ENCODE measurements at regions of chr5 and their contacts with region 1.

Region 1: GRCh38 chr5:43227655-43228054 is 35.6 kb downstream of the NIM1K start:
- DNase-seq: peak in 1 of 2 experiments; percentile 43
- H3K4me3 ChIP-seq: no peak overlapping the region
- H3K4me3 Mint-ChIP-seq: no peak overlapping the region
- H3K27ac Mint-ChIP-seq: no peak overlapping the region
- H3K4me1 ChIP-seq: no peaks in the 10 kb centered on the region
- H3K4me1 Mint-ChIP-seq: no peaks in the 10 kb centered on the region
- H3K27me3 ChIP-seq: no peaks in the 10 kb centered on the region
- H3K27me3 Mint-ChIP-seq: no peaks in the 10 kb centered on the region
- CTCF ChIP-seq: peak; percentile 52 to 67

Region 2: DNA sequence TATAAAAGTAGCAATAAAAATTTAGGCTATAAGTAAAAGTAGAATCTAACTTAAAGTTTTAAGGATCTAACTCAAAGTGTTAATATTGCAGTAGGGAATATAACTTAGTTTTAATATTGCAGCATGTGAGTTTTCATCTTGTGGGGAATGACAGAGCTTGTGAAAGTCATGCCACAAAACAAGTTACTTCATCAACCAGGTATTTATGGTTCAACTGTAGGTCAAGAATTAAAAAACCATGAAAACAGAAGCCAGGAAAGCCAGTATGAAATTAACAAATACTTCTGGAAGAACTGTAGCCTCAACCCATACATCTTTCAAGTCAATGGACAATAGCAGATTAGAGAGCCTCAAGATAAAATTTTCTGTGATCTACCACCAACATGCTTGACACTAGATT is 66.6 kb after region 1 on chr5:
- CTCF ChIA-PET with region 1: no interaction called
- POLR2A ChIA-PET with region 1: no interaction called
- intact Hi-C with region 1: loop called (anchors 5 kb)
- DNase-seq: no peak
- H3K4me3 ChIP-seq: no peak overlapping the region
- H3K4me3 Mint-ChIP-seq: no peak overlapping the region
- H3K27ac Mint-ChIP-seq: no peak overlapping the region
- H3K4me1 ChIP-seq: peaks cover 6% of the 10 kb centered on the region
- H3K4me1 Mint-ChIP-seq: peaks cover 6% of the 10 kb centered on the region
- H3K27me3 ChIP-seq: no peaks in the 10 kb centered on the region
- H3K27me3 Mint-ChIP-seq: no peaks in the 10 kb centered on the region
- CTCF ChIP-seq: no peak

Region 3: DNA sequence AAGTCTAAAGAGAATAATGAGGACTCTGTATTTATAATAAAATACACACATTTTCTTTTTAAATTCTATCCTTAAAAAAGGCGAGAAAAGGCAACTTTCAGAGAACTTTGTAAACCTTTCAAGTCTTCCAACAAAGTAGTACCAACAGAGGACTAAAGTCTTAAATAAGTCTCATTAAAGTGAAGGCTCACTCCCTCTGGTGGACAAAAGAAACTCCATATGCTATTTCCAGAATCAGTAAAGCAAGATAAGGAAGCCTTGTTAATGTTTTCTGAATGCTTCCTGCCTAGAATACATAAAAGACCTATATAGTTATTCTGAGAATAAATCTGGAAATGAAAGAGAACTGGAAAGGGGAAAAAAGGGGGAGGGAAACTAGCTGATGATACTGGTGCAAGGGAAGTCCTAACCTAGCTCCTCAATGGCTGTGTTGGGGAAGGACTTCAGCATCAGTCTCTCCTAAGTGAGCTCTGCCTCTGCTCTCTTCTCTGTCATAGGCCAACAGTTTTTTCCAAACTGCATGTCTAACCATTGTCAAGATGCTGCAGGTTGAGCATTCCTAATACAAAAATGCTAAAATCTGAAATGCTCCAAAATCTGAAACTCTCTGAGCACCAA is 78.4 kb after region 1 on chr5:
- CTCF ChIA-PET with region 1: no interaction called
- POLR2A ChIA-PET with region 1: no interaction called
- intact Hi-C with region 1: loop called (anchors 1 kb)
- DNase-seq: peak in 1 of 2 experiments; percentile 55
- H3K4me3 ChIP-seq: no peak overlapping the region
- H3K4me3 Mint-ChIP-seq: no peak overlapping the region
- H3K27ac Mint-ChIP-seq: no peak overlapping the region
- H3K4me1 ChIP-seq: peaks cover 31% of the 10 kb centered on the region
- H3K4me1 Mint-ChIP-seq: peaks cover 25% of the 10 kb centered on the region
- H3K27me3 ChIP-seq: no peaks in the 10 kb centered on the region
- H3K27me3 Mint-ChIP-seq: no peaks in the 10 kb centered on the region
- CTCF ChIP-seq: peak; percentile 66 to 74